Astrocyte of the cerebellum (primary cell): ENCODE measurements at regions of chr13 and their contacts with region 1.

Region 1: DNA sequence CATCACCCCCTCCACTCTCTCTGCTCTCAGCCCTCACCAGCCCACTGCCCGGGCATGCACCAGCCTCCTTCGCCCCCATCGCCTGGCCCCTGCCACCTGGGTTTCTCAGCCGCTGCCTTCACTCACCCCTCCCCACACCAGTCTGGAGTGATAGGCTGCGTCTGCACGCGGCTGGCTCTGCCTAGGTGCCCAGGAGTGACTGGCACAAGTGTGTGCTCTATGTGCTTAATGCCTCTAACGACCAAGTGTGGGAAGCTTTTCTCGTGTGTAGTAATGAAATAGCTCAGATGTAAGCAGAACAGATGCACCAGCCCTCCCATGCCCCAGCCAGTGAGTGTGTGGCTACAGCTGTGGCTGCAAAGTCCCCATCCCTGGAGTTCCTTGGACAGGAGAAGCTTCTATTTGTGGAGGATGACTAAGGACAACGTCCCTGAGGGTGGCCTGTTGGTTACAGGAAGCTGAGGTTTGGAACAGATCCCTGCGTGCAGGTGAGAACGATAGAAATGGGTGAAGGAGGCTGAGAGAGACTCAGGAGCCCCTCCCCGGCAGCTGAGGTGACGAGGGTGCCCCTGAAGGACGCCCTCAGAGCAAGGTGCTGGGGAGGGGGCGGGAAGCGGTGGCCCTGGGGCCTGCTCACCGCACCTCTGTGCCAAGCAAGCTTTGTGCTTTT is 35.6 kb downstream of the ATP11A start:
- DNase-seq: no peak
- H3K4me3 ChIP-seq: no peak overlapping the region
- CTCF ChIP-seq: no peak

Region 2: GRCh38 chr13:112669881-112670499 is 55.5 kb before region 1 on chr13:
- in situ Hi-C with region 1: loop called (anchors 5 kb)
- DNase-seq: no peak
- H3K4me3 ChIP-seq: no peak overlapping the region
- CTCF ChIP-seq: no peak

Region 3: DNA sequence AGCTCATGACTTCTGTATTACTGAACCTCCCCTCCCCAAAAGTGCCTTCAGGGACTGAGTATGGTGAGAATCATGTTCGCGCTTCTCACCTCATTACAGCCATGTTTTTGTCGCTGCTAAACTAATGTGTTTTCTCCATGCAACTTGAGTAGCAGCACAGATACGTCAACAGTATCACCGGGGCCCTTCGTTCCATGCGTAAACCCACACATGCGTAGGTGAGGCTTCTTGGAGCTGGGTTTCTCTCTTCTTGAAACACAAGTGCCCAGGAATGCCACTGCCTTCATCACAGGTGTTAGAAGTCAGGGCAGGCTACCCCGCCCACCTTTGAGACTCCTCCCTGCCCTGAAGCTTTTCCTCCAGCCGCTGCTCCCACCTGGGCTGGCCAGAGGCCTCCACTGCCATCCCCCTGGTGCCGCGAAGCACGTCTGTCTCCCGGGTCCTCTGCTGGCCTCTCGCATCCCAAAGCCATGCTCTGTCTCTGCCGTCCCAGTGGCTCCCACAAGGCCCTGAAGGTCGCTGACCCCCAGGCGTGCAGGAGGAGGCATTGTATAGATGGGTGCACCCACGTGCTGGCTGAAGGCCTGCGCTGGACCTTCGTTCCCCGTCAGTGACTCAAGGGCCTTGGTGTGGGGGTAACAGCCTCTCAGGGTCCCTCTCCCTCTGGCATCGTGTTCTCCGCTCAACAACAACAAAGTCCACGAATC is 108.2 kb after region 1 on chr13:
- in situ Hi-C with region 1: loop called (anchors 5 kb)
- DNase-seq: no peak
- H3K4me3 ChIP-seq: no peak overlapping the region
- CTCF ChIP-seq: no peak

Region 4: DNA sequence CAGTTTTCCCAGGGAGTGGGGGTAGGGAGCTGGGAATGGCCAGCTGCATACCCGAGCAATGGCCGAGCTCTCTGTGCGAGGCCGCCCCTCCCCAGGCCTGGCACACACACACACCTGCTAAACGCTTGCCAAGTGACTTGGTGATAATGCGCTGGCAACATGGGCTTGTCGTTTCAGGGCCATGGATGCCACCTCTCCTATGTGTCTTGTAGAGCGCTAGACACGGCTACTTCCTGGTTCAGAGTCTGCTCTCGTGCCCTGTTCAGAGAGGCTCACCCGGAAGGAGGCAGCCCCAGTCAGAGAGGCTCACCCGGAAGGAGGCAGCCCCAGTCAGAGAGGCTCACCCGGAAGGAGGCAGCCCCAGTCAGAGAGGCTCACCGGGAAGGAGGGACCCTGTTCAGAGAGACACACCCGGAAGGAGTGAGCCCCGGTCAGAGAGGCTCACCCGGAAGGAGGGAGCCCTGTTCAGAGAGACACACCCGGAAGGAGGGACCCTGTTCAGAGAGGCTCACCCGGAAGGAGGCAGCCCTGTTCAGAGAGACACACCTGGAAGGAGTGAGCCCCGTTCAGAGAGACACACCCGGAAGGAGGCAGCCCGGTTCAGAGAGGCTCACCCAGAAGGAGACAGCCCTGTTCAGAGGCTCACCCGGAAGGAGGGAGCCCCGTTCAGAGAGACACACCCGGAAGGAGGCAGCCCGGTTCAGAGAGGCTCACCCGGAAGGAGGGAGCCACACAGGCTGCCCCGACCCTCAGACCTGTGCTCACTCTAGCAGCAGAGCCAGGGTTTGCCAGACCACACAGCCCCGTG is 723.6 kb after region 1 on chr13:
- in situ Hi-C with region 1: no loop called
- DNase-seq: no peak
- H3K4me3 ChIP-seq: no peak overlapping the region
- CTCF ChIP-seq: no peak